CD4-positive, alpha-beta memory T cell (primary cell): ENCODE measurements at regions of chr6 and their contacts with region 1.

Region 1: GRCh38 chr6:33271458-33272274 is at the starts of genes RPS18 and VPS52:
- DNase-seq: peak; percentile 95 to 98 (median 96)
- H3K4me3 ChIP-seq: peak within 1 kb of the TSS; percentile 75 to 90
- H3K4me3 Mint-ChIP-seq: peak within 1 kb of the TSS; percentile 96 to 100 (median 98)
- H3K27ac ChIP-seq: peak within 1 kb of the TSS; percentile 85
- H3K27ac Mint-ChIP-seq: peak within 1 kb of the TSS; percentile 97 to 100 (median 99)
- H3K4me1 ChIP-seq: peaks cover 62% of the 10 kb centered on the region
- H3K4me1 Mint-ChIP-seq: peaks cover 43 to 78% (median 61%) of the 10 kb centered on the region in 4 donors
- H3K27me3 ChIP-seq: no peaks in the 10 kb centered on the region
- H3K27me3 Mint-ChIP-seq: no peaks in the 10 kb centered on the region
- total RNA-seq, gene RPS18: 3,264 to 3,439 TPM
- total RNA-seq, gene VPS52: 89.4 to 95.7 TPM

Region 2: GRCh38 chr6:31971993-31972708 is 1299.5 kb before region 1 on chr6 and contains the start of gene DXO:
- CTCF ChIA-PET with region 1: no interaction called
- POLR2A ChIA-PET with region 1: interaction called, 4 read pairs
- intact Hi-C with region 1: loop called (anchors 10 kb)
- DNase-seq: peak; percentile 99 to 100 (median 99)
- H3K4me3 ChIP-seq: peak within 1 kb of the TSS; percentile 63 to 77
- H3K4me3 Mint-ChIP-seq: peak within 1 kb of the TSS; percentile 97 to 99 (median 98)
- H3K27ac ChIP-seq: peak within 1 kb of the TSS; percentile 99
- H3K27ac Mint-ChIP-seq: peak within 1 kb of the TSS; percentile 100
- H3K4me1 ChIP-seq: peaks cover 31% of the 10 kb centered on the region
- H3K4me1 Mint-ChIP-seq: peaks cover 21 to 58% (median 32%) of the 10 kb centered on the region in 4 donors
- H3K27me3 ChIP-seq: no peaks in the 10 kb centered on the region
- H3K27me3 Mint-ChIP-seq: no peaks in the 10 kb centered on the region
- total RNA-seq, gene DXO: 27.8 to 30.3 TPM

Region 3: GRCh38 chr6:33104893-33105292 is 166.8 kb before region 1 on chr6:
- CTCF ChIA-PET with region 1: no interaction called
- POLR2A ChIA-PET with region 1: no interaction called
- intact Hi-C with region 1: no loop called
- DNase-seq: no peak
- H3K4me3 ChIP-seq: no peak overlapping the region
- H3K4me3 Mint-ChIP-seq: no peak overlapping the region
- H3K27ac ChIP-seq: no peak overlapping the region
- H3K27ac Mint-ChIP-seq: no peak overlapping the region
- H3K4me1 ChIP-seq: no peaks in the 10 kb centered on the region
- H3K4me1 Mint-ChIP-seq: no peaks in the 10 kb centered on the region
- H3K27me3 ChIP-seq: peaks cover 4% of the 10 kb centered on the region
- H3K27me3 Mint-ChIP-seq: peaks cover 22 to 32% of the 10 kb centered on the region in 2 donors

Region 4: DNA sequence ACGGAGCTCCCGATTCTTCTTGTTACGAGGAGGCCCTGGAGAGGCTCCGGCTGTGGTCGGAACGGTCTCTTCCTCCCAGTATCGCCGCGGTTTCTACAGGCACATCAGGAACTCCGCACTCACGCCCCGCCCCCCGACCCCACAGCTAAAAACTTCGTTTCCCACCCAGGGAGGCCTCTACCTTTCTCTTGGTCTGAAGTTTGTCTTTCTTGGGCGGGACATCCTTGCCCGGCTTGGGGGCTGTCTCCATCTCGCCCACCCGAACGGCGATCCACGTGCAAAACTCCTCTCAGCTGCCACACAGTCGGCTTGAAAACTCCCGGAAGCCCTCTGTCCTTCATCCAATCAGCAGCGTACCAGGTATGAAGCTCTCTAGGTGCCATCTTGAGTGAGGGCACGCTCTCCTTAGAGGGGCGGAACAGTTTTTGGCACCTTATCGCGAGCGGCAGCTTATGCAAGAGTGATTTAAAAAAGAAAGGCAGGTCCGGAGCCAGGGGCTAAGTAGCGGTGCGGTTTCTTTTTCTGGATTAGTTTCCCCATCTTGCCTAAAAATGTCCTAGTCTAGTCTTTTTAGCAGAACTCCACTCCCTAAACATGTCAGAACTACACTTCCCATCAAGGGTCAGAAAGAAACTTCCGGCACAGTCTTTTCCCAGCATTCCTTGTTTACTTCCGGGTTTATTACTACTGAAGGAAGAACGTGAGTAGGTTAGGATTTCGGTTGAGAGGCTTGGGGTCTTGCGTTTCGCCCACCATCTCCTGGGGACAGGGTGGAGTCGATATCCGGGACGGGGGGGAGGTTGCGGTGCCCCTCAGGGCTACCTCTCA is 17.5 kb after region 1 on chr6 and contains the starts of genes PFDN6 and WDR46:
- CTCF ChIA-PET with region 1: interaction called, 17 read pairs
- POLR2A ChIA-PET with region 1: interaction called, 220 read pairs
- intact Hi-C with region 1: loop called (anchors 1 kb)
- DNase-seq: peak; percentile 87 to 92 (median 89)
- H3K4me3 ChIP-seq: peak within 1 kb of the TSS; percentile 73 to 84
- H3K4me3 Mint-ChIP-seq: peak within 1 kb of the TSS; percentile 96 to 100 (median 98)
- H3K27ac ChIP-seq: peak within 1 kb of the TSS; percentile 71
- H3K27ac Mint-ChIP-seq: peak within 1 kb of the TSS; percentile 79 to 98 (median 95)
- H3K4me1 ChIP-seq: peaks cover 30% of the 10 kb centered on the region
- H3K4me1 Mint-ChIP-seq: peaks cover 24 to 48% (median 36%) of the 10 kb centered on the region in 4 donors
- H3K27me3 ChIP-seq: no peaks in the 10 kb centered on the region
- H3K27me3 Mint-ChIP-seq: no peaks in the 10 kb centered on the region
- total RNA-seq, gene PFDN6: 43.6 to 45.5 TPM
- total RNA-seq, gene WDR46: 60.8 to 66.1 TPM

Region 5: DNA sequence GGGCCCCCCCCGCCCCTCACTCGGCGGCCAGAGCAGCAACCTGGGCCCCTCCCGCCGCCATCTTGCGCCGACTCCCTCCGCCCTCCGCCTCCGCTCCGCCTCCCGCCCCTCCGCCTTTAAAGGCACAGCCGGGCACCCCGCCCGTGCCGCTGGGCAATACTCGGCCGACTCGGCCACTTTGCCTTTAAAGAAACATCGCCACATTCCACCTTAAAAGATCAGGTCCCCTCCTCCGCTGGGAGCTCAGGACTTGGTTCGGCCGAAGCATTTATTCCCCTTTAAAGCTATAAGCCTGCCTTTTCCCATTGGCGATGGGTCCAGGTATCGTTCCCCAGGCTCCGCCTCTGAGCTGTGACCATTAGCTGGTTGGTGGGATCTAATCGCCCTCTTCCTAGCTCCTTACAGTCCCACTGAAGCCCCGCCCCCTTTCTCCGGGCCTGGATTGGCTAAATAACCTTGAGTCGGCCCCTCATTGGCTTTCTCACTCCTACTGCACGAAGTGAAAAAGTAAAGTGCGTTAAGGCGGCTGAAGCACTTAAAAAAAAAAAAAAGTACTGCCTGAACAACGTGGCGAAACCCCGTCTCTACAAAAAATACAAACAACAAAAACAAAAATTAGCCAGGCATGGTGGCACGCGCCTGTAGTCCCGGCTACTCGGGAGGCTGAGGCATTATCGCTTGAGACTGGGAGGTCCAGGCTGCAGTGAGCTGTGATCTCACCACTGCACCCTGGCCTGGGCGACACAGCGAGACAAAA is 46.2 kb after region 1 on chr6 and contains the start of gene ZBTB22:
- CTCF ChIA-PET with region 1: interaction called, 10 read pairs
- POLR2A ChIA-PET with region 1: interaction called, 40 read pairs
- intact Hi-C with region 1: loop called (anchors 1 kb)
- DNase-seq: peak; percentile 96 to 99 (median 97)
- H3K4me3 ChIP-seq: peak within 1 kb of the TSS; percentile 73 to 100
- H3K4me3 Mint-ChIP-seq: peak within 1 kb of the TSS; percentile 98 to 100 (median 99)
- H3K27ac ChIP-seq: peak within 1 kb of the TSS; percentile 83
- H3K27ac Mint-ChIP-seq: peak within 1 kb of the TSS; percentile 98 to 99 (median 98)
- H3K4me1 ChIP-seq: peaks cover 73% of the 10 kb centered on the region
- H3K4me1 Mint-ChIP-seq: peaks cover 40 to 100% (median 62%) of the 10 kb centered on the region in 4 donors
- H3K27me3 ChIP-seq: no peaks in the 10 kb centered on the region
- H3K27me3 Mint-ChIP-seq: no peaks in the 10 kb centered on the region
- total RNA-seq, gene ZBTB22: 28.6 to 28.7 TPM

Region 6: GRCh38 chr6:33417903-33418689 is 146.4 kb after region 1 on chr6 and contains the start of gene CUTA:
- CTCF ChIA-PET with region 1: no interaction called
- POLR2A ChIA-PET with region 1: interaction called, 26 read pairs
- intact Hi-C with region 1: loop called (anchors 5 kb)
- DNase-seq: peak; percentile 97 to 100 (median 100)
- H3K4me3 ChIP-seq: peak within 1 kb of the TSS; percentile 82 to 94
- H3K4me3 Mint-ChIP-seq: peak within 1 kb of the TSS; percentile 87 to 97 (median 94)
- H3K27ac ChIP-seq: peak within 1 kb of the TSS; percentile 97
- H3K27ac Mint-ChIP-seq: peak within 1 kb of the TSS; percentile 99 to 100 (median 99)
- H3K4me1 ChIP-seq: peaks cover 72% of the 10 kb centered on the region
- H3K4me1 Mint-ChIP-seq: peaks cover 43 to 87% (median 61%) of the 10 kb centered on the region in 4 donors
- H3K27me3 ChIP-seq: no peaks in the 10 kb centered on the region
- H3K27me3 Mint-ChIP-seq: no peaks in the 10 kb centered on the region
- total RNA-seq, gene CUTA: 210 to 217 TPM